Activated CD4-positive, alpha-beta T cell treated with anti-CD3 and anti-CD28 coated beads, Interleukin-2, amount 10 ng/mL, durations not matched to agents 7 days and 5 days (primary cell): ENCODE measurements at regions of chr13 and their contacts with region 1.

Region 1: GRCh38 chr13:44651209-44651608 is 75.1 kb upstream of the TSC22D1 start:
- DNase-seq: no peak
- H3K4me3 Mint-ChIP-seq: no peak overlapping the region
- H3K27ac Mint-ChIP-seq: no peak overlapping the region
- H3K4me1 Mint-ChIP-seq: peaks cover 4% of the 10 kb centered on the region
- H3K27me3 Mint-ChIP-seq: peaks cover 4% of the 10 kb centered on the region

Region 2: GRCh38 chr13:44101347-44102083 is 549.7 kb before region 1 on chr13:
- CTCF ChIA-PET with region 1: interaction called, 11 read pairs
- POLR2A ChIA-PET with region 1: no interaction called
- DNase-seq: no peak
- H3K4me3 Mint-ChIP-seq: no peak overlapping the region
- H3K27ac Mint-ChIP-seq: no peak overlapping the region
- H3K4me1 Mint-ChIP-seq: no peaks in the 10 kb centered on the region
- H3K27me3 Mint-ChIP-seq: peaks cover 8% of the 10 kb centered on the region

Region 3: GRCh38 chr13:44470638-44471562 is 180.3 kb before region 1 on chr13:
- CTCF ChIA-PET with region 1: no interaction called
- POLR2A ChIA-PET with region 1: no interaction called
- DNase-seq: no peak
- H3K4me3 Mint-ChIP-seq: no peak overlapping the region
- H3K27ac Mint-ChIP-seq: no peak overlapping the region
- H3K4me1 Mint-ChIP-seq: no peaks in the 10 kb centered on the region
- H3K27me3 Mint-ChIP-seq: no peaks in the 10 kb centered on the region

Region 4: GRCh38 chr13:44667943-44668342 is 16.7 kb after region 1 on chr13:
- CTCF ChIA-PET with region 1: no interaction called
- POLR2A ChIA-PET with region 1: no interaction called
- DNase-seq: no peak
- H3K4me3 Mint-ChIP-seq: no peak overlapping the region
- H3K27ac Mint-ChIP-seq: no peak overlapping the region
- H3K4me1 Mint-ChIP-seq: no peaks in the 10 kb centered on the region
- H3K27me3 Mint-ChIP-seq: peaks cover 4% of the 10 kb centered on the region

Region 5: GRCh38 chr13:45564133-45564776 is 913.0 kb after region 1 on chr13:
- CTCF ChIA-PET with region 1: no interaction called
- POLR2A ChIA-PET with region 1: interaction called, 10 read pairs
- DNase-seq: no peak
- H3K4me3 Mint-ChIP-seq: no peak overlapping the region
- H3K27ac Mint-ChIP-seq: no peak overlapping the region
- H3K4me1 Mint-ChIP-seq: peaks cover 2% of the 10 kb centered on the region
- H3K27me3 Mint-ChIP-seq: peaks cover 4% of the 10 kb centered on the region